Heart right ventricle (tissue), 16 donors: ENCODE measurements at regions of chr16 and their contacts with region 1.

Region 1: GRCh38 chr16:48535831-48536613 is 74.0 kb downstream of the N4BP1 start:
- DNase-seq: peak; percentile 50 to 75
- ATAC-seq: peak; percentile 30 to 70 (median 52)
- H3K4me3 ChIP-seq: no peak overlapping the region
- H3K27ac ChIP-seq: peak overlapping the region; percentile 52 to 85 (median 73)
- H3K4me1 ChIP-seq: peaks cover 26 to 58% (median 41%) of the 10 kb centered on the region in 9 donors
- H3K27me3 ChIP-seq: no peaks in the 10 kb centered on the region
- CTCF ChIP-seq: no peak

Region 2: GRCh38 chr16:48231727-48232492 is 304.1 kb before region 1 on chr16:
- intact Hi-C with region 1: loop called in 2 of 10 experiments (anchors 10 kb)
- DNase-seq: peak in 1 of 2 donors; percentile 10
- ATAC-seq: peak in 5 of 8 donors; percentile 28 to 61 (median 41)
- H3K4me3 ChIP-seq: no peak overlapping the region
- H3K27ac ChIP-seq: no peak overlapping the region
- H3K4me1 ChIP-seq: peaks cover 0 to 8% (median 0%) of the 10 kb centered on the region in 9 donors
- H3K27me3 ChIP-seq: no peaks in the 10 kb centered on the region
- CTCF ChIP-seq: peak in 7 of 9 donors; percentile 27 to 53 (median 36)

Region 3: DNA sequence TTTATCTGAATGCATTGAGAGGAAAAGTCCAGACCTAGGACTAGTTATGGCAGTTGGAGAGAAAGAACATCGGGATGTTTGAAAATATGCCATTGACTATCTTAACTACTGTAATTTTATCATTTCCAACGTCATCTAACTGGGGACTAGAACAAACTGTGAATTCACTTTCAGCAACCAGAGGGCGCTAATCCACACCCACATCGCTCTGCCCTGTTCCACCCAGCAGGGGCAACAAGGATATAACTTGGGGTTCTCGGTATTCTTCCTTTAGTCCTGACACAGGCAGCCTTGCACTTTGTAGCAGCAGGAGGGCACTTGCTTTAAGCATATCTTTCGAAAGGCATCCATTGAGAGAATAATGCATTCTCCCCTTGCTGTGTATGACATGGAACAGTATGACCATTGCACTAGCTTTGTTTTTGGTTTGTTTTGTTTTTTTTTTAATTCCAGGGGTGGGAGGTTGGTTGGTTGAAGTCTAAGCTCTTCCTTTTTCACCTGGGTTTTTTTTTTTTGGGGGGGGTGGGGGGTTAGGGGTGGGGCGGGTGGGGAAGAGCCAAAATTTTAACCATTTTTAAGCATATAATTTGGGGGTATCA is 182.4 kb before region 1 on chr16:
- intact Hi-C with region 1: loop called in 9 of 10 experiments (anchors 5 to 10 kb)
- DNase-seq: peak in 1 of 2 donors; percentile 61
- ATAC-seq: peak; percentile 73 to 87 (median 85)
- H3K4me3 ChIP-seq: no peak overlapping the region
- H3K27ac ChIP-seq: no peak overlapping the region
- H3K4me1 ChIP-seq: peaks cover 0 to 30% (median 9%) of the 10 kb centered on the region in 9 donors
- H3K27me3 ChIP-seq: no peaks in the 10 kb centered on the region
- CTCF ChIP-seq: peak; percentile 72 to 91 (median 87)

Region 4: DNA sequence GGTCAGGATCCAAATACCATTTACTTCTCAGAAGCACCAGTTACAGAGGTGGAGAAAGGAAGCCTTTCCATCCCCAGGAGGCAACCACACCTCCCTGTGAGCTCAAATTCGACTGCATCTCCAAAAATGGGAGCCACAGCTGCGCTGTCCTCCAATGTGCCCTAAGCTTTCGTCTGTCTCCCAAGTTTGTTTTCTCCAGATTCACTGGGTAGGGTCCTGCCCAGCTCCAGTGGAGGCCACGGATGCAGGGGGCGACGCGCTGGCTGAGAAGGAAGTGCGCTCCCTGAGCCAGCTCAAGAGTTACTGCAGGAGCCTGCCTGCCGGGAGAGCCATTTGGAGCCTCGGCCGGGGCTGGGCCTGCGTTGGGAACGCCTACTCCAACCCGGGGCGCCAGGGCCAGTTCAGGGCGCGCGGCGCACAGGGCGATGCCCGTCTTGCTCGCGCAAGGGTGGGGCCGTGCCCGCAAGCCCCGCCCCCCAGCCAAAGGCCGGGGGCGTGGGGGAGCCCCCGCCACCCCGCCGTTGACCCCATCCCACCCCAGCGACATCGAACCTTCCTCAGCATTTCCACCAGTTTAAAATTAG is 170.3 kb before region 1 on chr16:
- intact Hi-C with region 1: loop called in 1 of 10 experiments (anchors 5 kb)
- DNase-seq: peak; percentile 91
- ATAC-seq: peak; percentile 98 to 100 (median 99)
- H3K4me3 ChIP-seq: peak overlapping the region; percentile 29 to 71 (median 63)
- H3K27ac ChIP-seq: peak overlapping the region; percentile 5 to 88 (median 79)
- H3K4me1 ChIP-seq: peaks cover 7 to 71% (median 49%) of the 10 kb centered on the region in 9 donors
- H3K27me3 ChIP-seq: no peaks in the 10 kb centered on the region
- CTCF ChIP-seq: peak in 4 of 9 donors; percentile 7 to 34 (median 26)

Region 5: GRCh38 chr16:48393485-48394354 is 142.3 kb before region 1 on chr16:
- intact Hi-C with region 1: loop called in 3 of 10 experiments (anchors 5 to 10 kb)
- DNase-seq: no peak
- ATAC-seq: peak in 5 of 8 donors; percentile 28 to 87 (median 34)
- H3K4me3 ChIP-seq: no peak overlapping the region
- H3K27ac ChIP-seq: peak overlapping the region in 2 of 10 donors; percentile 16 to 39
- H3K4me1 ChIP-seq: no peaks in the 10 kb centered on the region
- H3K27me3 ChIP-seq: no peaks in the 10 kb centered on the region
- CTCF ChIP-seq: no peak